ENCODE measurements at regions of chr3 and their contacts with region 1.

Region 1: DNA sequence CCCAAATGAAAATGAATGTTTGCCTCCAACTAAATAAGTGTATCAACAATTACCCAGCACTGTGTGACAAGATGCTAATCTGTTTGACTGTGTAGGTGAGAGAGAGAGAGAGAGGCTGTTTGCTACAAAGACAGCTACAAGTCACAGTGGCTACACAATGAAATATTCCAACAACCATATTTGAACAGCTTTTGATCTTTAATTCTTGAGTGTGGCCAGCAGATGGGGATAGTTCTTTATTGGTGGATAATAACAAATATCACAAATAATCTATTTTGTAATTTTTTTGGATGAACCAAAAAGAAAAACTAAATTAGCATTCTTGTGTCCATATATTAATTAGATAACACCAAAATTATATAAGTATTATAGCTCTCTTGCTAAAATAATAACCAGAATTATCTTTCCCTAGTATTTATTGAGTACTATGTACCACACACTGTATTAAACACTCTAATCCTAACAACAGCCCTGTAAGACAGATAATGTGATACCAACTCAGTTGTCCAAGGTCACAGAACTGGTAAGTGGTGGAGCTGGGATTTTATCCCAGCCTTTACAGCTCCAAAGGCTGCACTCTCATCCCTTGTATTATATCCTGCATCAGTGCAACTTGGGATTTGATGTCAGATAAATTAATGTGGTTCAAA is 61.9 kb upstream of the C3orf80 start:
- DNase-seq: no peak
- H3K4me3 ChIP-seq: no peak overlapping the region
- H3K27ac ChIP-seq: no peak overlapping the region
- H3K4me1 ChIP-seq: no peaks in the 10 kb centered on the region
- H3K27me3 ChIP-seq: peaks cover 6% of the 10 kb centered on the region
- CTCF ChIP-seq: peak; percentile 63

Region 2: GRCh38 chr3:159219231-159219630 is 944.1 kb before region 1 on chr3:
- intact Hi-C with region 1: no loop called
- DNase-seq: no peak
- H3K4me3 ChIP-seq: no peak overlapping the region
- H3K27ac ChIP-seq: no peak overlapping the region
- H3K4me1 ChIP-seq: no peaks in the 10 kb centered on the region
- H3K27me3 ChIP-seq: no peaks in the 10 kb centered on the region
- CTCF ChIP-seq: no peak

Region 3: GRCh38 chr3:159852821-159853505 is 310.4 kb before region 1 on chr3:
- intact Hi-C with region 1: no loop called
- DNase-seq: peak; percentile 80
- H3K4me3 ChIP-seq: peak overlapping the region; percentile 62
- H3K27ac ChIP-seq: peak overlapping the region; percentile 93
- H3K4me1 ChIP-seq: peaks cover 100% of the 10 kb centered on the region
- H3K27me3 ChIP-seq: no peaks in the 10 kb centered on the region
- CTCF ChIP-seq: no peak

Region 4: DNA sequence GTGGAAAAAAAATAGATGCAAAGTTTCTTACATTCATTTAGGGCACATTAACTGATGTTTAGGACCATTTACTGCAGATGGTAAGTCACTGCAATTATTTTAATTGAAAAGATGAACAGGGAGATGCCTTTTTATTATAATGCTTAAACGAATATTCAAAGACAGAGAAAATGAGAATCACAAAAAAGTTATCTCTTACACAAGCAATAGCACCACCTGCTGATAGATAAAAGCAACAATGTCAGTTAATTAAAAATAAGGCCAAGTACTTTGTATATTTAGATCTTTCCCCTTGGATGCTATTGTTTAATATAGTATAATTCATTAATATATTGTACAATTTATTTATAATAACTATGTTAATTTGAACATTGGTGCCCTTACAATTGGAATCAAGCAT is 179.8 kb after region 1 on chr3:
- intact Hi-C with region 1: loop called (anchors 10 kb)
- DNase-seq: no peak
- H3K4me3 ChIP-seq: no peak overlapping the region
- H3K27ac ChIP-seq: no peak overlapping the region
- H3K4me1 ChIP-seq: no peaks in the 10 kb centered on the region
- H3K27me3 ChIP-seq: no peaks in the 10 kb centered on the region
- CTCF ChIP-seq: peak; percentile 57

Region 5: DNA sequence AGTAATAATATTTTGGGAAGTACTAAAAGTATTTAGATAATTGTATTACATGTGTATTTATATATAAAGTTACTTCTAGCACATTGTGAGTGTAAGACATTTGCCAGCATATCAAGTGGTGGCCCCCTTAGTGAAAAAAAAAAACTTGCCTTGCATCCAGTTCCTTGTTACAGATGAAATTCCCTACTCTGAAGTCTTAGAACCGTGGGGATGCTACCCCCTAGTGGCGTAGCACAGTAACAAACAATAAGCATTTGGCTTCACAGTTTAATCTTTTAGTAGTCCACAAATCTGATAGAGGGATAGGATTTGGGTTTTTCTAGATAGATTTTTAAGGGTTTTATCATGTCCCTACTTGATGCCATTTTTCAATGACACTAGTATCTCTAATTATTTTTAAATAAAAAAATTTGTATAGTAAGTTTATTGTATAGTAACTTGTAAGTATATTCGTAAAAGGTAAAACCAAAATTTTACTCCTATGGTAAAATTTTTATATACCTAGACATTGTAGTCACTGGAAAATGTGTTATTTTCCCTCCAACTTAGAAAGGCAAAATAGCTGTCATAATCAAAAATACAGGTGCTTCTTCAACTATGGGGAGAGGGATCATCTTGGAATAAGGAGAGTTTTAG is 250.4 kb after region 1 on chr3:
- intact Hi-C with region 1: loop called (anchors 5 kb)
- DNase-seq: no peak
- H3K4me3 ChIP-seq: no peak overlapping the region
- H3K27ac ChIP-seq: no peak overlapping the region
- H3K4me1 ChIP-seq: no peaks in the 10 kb centered on the region
- H3K27me3 ChIP-seq: no peaks in the 10 kb centered on the region
- CTCF ChIP-seq: peak; percentile 91